Mucosa of descending colon (tissue), 3 donors: ENCODE measurements at regions of chr18 and their contacts with region 1.

Region 1: GRCh38 chr18:36688020-36688965 is 140.5 kb downstream of the TPGS2 start:
- DNase-seq: peak in 2 of 3 donors; percentile 55 to 85
- ATAC-seq: peak; percentile 81
- H3K4me3 ChIP-seq: no peak overlapping the region
- H3K4me1 ChIP-seq: no peaks in the 10 kb centered on the region
- CTCF ChIP-seq: peak; percentile 70

Region 2: GRCh38 chr18:36757081-36757480 is 68.8 kb after region 1 on chr18:
- intact Hi-C with region 1: loop called (anchors 5 kb)
- DNase-seq: peak in 1 of 3 donors; percentile 35
- ATAC-seq: peak; percentile 77
- H3K4me3 ChIP-seq: no peak overlapping the region
- H3K4me1 ChIP-seq: no peaks in the 10 kb centered on the region
- CTCF ChIP-seq: peak; percentile 7